Cardiac septum (tissue), 1 donor: ENCODE measurements at regions of chr12 and their contacts with region 1.

Region 1: GRCh38 chr12:81450920-81451739 is 308.0 kb downstream of the PPFIA2 start:
- DNase-seq: no peak

Region 2: DNA sequence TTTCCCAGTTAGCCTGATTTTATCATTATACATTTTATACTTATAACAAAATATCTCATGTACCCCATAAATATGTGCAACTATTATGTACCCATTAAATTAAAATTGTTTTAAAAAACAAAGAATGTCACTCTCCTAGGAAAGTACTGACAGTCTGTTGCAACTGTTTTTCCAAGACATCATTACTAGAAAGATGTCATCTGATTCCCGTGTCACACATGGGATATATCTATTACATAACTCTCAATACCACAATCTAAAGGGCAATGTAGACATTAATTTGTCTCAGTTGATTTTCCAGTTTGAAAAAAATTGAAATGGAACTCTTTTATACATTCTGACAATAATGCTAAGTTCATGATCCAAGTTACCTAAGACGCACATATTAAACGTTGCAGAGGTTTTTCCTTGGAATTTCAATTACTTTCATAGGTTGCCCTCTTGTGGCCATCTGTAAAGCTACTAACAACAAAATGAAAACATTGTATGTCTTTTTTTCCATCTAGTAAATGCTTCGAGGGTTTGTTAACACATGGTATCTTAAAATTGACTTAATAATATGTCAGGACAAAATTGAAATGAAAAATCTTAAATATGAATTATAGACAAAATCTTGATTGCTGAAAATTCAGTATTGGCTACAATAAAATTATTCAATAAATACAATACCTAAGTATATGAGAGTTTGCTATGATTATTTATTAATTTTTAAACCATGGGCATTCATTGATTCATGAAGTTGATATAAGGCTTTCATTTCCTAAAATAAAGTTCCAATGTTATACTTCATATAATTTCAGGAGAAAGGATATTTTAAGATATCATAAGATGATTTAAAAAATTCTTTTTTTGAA is 176.4 kb after region 1 on chr12:
- intact Hi-C with region 1: loop called (anchors 5 kb)
- DNase-seq: no peak